ENCODE measurements at regions of chr3 and their contacts with region 1.

Region 1: GRCh38 chr3:14402304-14402811 is at the start of gene SLC6A6:
- DNase-seq: peak; percentile 98
- ATAC-seq: peak; percentile 90
- H3K4me3 ChIP-seq: peak within 1 kb of the TSS; percentile 76
- H3K27ac ChIP-seq: peak within 1 kb of the TSS; percentile 88
- H3K4me1 ChIP-seq: peaks cover 33% of the 10 kb centered on the region
- H3K27me3 ChIP-seq: no peaks in the 10 kb centered on the region
- CTCF ChIP-seq: peak; percentile 45
- total RNA-seq, gene SLC6A6: 54.3 TPM

Region 2: GRCh38 chr3:14461748-14462324 is 59.5 kb after region 1 on chr3:
- intact Hi-C with region 1: loop called (anchors 10 kb)
- DNase-seq: peak; percentile 77
- ATAC-seq: peak; percentile 61
- H3K4me3 ChIP-seq: no peak overlapping the region
- H3K27ac ChIP-seq: no peak overlapping the region
- H3K4me1 ChIP-seq: peaks cover 16% of the 10 kb centered on the region
- H3K27me3 ChIP-seq: no peaks in the 10 kb centered on the region
- CTCF ChIP-seq: peak; percentile 47

Region 3: GRCh38 chr3:14969671-14970070 is 567.3 kb after region 1 on chr3:
- intact Hi-C with region 1: no loop called
- DNase-seq: no peak
- ATAC-seq: no peak
- H3K4me3 ChIP-seq: no peak overlapping the region
- H3K27ac ChIP-seq: no peak overlapping the region
- H3K4me1 ChIP-seq: no peaks in the 10 kb centered on the region
- H3K27me3 ChIP-seq: no peaks in the 10 kb centered on the region
- CTCF ChIP-seq: no peak